ENCODE measurements at regions of chr1 and their contacts with region 1.

Region 1: DNA sequence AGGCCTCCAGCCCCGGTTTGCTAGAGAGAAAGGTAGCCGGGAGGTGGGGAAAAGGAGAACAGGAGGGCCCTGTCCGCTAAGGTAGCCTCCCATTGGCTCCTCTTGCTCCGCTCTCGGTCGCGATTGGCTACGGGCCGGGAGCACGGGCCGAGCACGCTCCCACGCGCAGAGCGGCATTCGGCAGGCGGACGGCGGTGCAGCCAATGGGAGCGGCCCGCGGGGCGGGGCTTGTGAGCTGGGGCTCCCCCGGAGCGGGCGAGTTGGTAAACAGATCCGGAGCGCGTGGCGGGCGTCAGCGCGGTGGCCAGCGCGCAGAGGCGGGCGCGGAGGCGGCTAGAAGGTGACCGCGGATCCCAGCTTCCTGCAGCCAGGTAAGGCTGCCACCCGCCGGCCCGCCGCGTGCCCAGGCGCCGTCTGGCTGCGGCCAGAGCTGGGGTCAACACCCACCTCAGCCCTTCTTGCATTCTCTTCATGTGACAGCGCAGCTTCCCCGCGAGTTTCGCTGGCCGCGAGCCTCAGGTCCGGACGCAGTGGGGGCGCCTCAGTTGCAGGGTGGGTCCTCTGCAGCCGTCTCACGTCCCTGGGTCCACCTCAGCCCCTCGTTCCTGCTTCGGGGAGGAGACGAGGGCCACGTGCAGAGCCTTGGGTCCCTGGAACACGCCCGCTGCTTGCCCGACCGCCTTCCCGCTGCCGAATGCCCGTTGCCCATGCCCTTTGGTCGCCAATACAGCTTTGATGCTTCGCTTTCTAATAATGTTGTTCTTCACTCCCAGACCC is at the start of gene COQ8A:
- DNase-seq: peak; percentile 97 to 100 (median 99)
- H3K4me3 ChIP-seq: peak within 1 kb of the TSS; percentile 85
- H3K4me3 Mint-ChIP-seq: peak within 1 kb of the TSS; percentile 86 to 95 (median 89)
- H3K27ac ChIP-seq: peak within 1 kb of the TSS; percentile 94
- H3K27ac Mint-ChIP-seq: peak within 1 kb of the TSS; percentile 93 to 98 (median 97)
- H3K4me1 ChIP-seq: peaks cover 43% of the 10 kb centered on the region
- H3K4me1 Mint-ChIP-seq: peaks cover 45 to 59% (median 58%) of the 10 kb centered on the region in 3 donors
- H3K27me3 ChIP-seq: no peaks in the 10 kb centered on the region
- H3K27me3 Mint-ChIP-seq: peaks cover 0 to 3% of the 10 kb centered on the region in 2 donors
- total RNA-seq, gene COQ8A: 30.7 to 35.2 TPM

Region 2: DNA sequence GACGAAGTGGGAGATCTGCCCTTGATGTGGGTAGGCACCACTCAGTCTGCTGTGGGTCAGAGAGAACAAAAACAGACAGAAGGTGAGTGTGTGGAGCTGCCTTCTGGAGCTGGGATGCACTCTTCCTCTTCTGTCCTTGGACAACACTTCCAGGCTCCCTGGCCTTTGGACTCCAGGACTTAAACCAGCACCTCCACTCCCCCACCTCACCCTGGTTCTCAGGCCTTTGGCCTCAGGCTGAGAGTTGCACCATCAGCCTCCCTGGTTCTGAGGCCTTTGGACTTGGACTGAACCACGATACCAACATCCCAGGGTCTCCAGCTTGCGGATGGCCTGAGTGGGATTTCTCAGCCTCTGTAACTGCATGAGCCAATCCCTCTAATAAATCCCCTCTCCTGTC is 459.8 kb before region 1 on chr1:
- CTCF ChIA-PET with region 1: no interaction called
- POLR2A ChIA-PET with region 1: interaction called, 10 read pairs
- DNase-seq: no peak
- H3K4me3 ChIP-seq: no peak overlapping the region
- H3K4me3 Mint-ChIP-seq: no peak overlapping the region
- H3K27ac ChIP-seq: no peak overlapping the region
- H3K27ac Mint-ChIP-seq: no peak overlapping the region
- H3K4me1 ChIP-seq: no peaks in the 10 kb centered on the region
- H3K4me1 Mint-ChIP-seq: peaks cover 0 to 2% (median 0%) of the 10 kb centered on the region in 3 donors
- H3K27me3 ChIP-seq: peaks cover 6% of the 10 kb centered on the region
- H3K27me3 Mint-ChIP-seq: peaks cover 25 to 32% of the 10 kb centered on the region in 2 donors

Region 3: GRCh38 chr1:226642876-226643576 is 297.2 kb before region 1 on chr1:
- CTCF ChIA-PET with region 1: no interaction called
- POLR2A ChIA-PET with region 1: interaction called, 10 read pairs
- DNase-seq: peak in 1 of 5 donors; percentile 62
- H3K4me3 ChIP-seq: no peak overlapping the region
- H3K4me3 Mint-ChIP-seq: peak overlapping the region in 5 of 7 donors; percentile 24 to 76 (median 59)
- H3K27ac ChIP-seq: no peak overlapping the region
- H3K27ac Mint-ChIP-seq: peak overlapping the region; percentile 67 to 93 (median 90)
- H3K4me1 ChIP-seq: peaks cover 54% of the 10 kb centered on the region
- H3K4me1 Mint-ChIP-seq: peaks cover 9 to 40% (median 40%) of the 10 kb centered on the region in 3 donors
- H3K27me3 ChIP-seq: no peaks in the 10 kb centered on the region
- H3K27me3 Mint-ChIP-seq: no peaks in the 10 kb centered on the region

Region 4: GRCh38 chr1:226882631-226883409 is 57.4 kb before region 1 on chr1:
- CTCF ChIA-PET with region 1: interaction called, 7 read pairs
- POLR2A ChIA-PET with region 1: interaction called, 25 read pairs
- DNase-seq: peak in 2 of 5 donors; percentile 39 to 47
- H3K4me3 ChIP-seq: peak overlapping the region; percentile 53
- H3K4me3 Mint-ChIP-seq: peak overlapping the region; percentile 69 to 84 (median 79)
- H3K27ac ChIP-seq: no peak overlapping the region
- H3K27ac Mint-ChIP-seq: peak overlapping the region; percentile 74 to 97 (median 90)
- H3K4me1 ChIP-seq: peaks cover 42% of the 10 kb centered on the region
- H3K4me1 Mint-ChIP-seq: peaks cover 33 to 41% (median 38%) of the 10 kb centered on the region in 3 donors
- H3K27me3 ChIP-seq: no peaks in the 10 kb centered on the region
- H3K27me3 Mint-ChIP-seq: peaks cover 0 to 2% of the 10 kb centered on the region in 2 donors